ENCODE measurements at regions of chr12 and their contacts with region 1.

Region 1: DNA sequence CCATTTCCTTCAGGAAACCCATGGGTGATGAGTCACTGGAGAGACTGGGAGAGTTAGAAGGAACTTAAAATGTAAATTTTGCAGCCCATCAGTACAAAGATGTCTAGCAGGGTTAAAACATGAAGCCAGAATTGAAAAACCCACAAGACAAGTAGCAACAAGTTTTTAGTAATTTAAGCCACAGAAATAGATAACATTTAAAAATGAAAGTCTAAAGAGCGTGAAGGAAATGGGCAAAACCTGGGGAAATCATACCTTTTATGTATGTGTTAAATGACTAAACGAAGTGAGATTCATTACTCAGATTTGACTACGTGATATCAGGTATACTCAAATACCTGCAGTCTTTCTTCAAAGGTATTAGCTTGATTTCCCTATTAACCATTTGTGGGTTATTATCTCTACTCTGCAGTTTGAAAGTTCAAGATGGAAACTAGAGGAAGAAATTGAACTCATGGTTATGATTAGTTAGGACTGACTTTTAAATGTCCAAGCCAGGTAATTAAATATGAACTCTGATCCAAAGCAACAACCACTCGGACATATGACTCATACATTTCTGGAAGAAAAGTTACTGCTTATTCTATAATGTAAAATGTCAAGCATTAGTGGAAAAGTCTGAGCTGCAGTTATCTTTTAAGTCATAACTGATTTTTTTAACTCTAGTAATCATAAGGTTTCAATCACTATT is 84.1 kb downstream of the ITPR2 start:
- DNase-seq: no peak
- ATAC-seq: peak; percentile 19
- H3K4me3 Mint-ChIP-seq: peak overlapping the region; percentile 11
- H3K27ac Mint-ChIP-seq: peak overlapping the region; percentile 61
- H3K4me1 Mint-ChIP-seq: peaks cover 53% of the 10 kb centered on the region
- H3K27me3 Mint-ChIP-seq: no peaks in the 10 kb centered on the region
- CTCF ChIP-seq: no peak

Region 2: DNA sequence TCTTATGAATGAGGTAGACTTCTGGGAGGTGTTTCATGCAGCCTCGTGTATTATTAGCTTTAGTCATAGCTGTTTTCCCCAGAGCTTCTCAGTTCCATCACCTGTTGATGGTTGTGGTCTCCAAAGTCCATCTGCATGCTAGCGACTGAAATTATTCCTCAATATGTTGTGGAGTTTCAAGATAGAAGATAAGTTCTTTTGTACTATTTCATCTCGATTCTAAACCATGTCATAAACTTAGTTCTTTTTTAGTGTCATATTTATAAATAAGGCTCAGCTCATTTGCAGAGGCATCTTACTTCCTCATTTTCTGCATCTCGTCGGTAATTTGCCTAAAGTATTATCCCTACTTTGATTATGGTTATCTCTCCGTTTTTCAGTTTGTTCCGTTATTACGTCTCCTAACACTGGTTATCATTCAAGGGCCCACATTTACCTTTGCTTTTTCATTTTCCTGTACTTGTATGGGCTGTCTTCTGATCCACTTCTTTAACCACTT is 35.0 kb before region 1 on chr12:
- CTCF ChIA-PET with region 1: no interaction called
- POLR2A ChIA-PET with region 1: no interaction called
- intact Hi-C with region 1: loop called (anchors 2 kb)
- DNase-seq: no peak
- ATAC-seq: peak; percentile 64
- H3K4me3 Mint-ChIP-seq: peak overlapping the region; percentile 25
- H3K27ac Mint-ChIP-seq: peak overlapping the region; percentile 38
- H3K4me1 Mint-ChIP-seq: peaks cover 25% of the 10 kb centered on the region
- H3K27me3 Mint-ChIP-seq: no peaks in the 10 kb centered on the region
- CTCF ChIP-seq: no peak

Region 3: GRCh38 chr12:26732005-26732908 is 16.6 kb before region 1 on chr12:
- CTCF ChIA-PET with region 1: no interaction called
- POLR2A ChIA-PET with region 1: no interaction called
- intact Hi-C with region 1: loop called (anchors 1 kb)
- DNase-seq: no peak
- ATAC-seq: peak; percentile 74
- H3K4me3 Mint-ChIP-seq: peak overlapping the region; percentile 52
- H3K27ac Mint-ChIP-seq: peak overlapping the region; percentile 86
- H3K4me1 Mint-ChIP-seq: peaks cover 71% of the 10 kb centered on the region
- H3K27me3 Mint-ChIP-seq: no peaks in the 10 kb centered on the region
- CTCF ChIP-seq: no peak

Region 4: DNA sequence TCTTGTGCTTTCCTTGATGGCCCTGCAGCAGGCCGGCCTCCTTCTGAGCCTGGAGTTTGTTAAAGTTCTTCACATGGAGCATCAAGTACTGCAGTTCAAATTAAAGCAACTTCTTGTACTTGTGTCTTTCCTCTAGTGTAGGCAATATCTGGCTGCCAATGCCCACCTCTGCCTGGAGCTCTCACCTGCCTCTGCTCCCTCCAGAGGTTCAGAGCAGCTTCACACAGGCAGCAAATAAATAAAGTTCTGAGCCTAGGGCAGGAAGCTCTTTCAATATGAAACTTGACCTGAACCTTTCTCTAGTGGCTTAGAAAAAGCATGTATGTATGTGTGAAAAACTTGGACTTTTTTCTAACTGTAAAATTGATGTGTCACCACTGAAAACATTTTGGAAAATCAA is 18.2 kb after region 1 on chr12:
- CTCF ChIA-PET with region 1: no interaction called
- POLR2A ChIA-PET with region 1: interaction called, 3 read pairs
- intact Hi-C with region 1: loop called (anchors 2 kb)
- DNase-seq: no peak
- ATAC-seq: no peak
- H3K4me3 Mint-ChIP-seq: no peak overlapping the region
- H3K27ac Mint-ChIP-seq: no peak overlapping the region
- H3K4me1 Mint-ChIP-seq: peaks cover 23% of the 10 kb centered on the region
- H3K27me3 Mint-ChIP-seq: no peaks in the 10 kb centered on the region
- CTCF ChIP-seq: no peak

Region 5: DNA sequence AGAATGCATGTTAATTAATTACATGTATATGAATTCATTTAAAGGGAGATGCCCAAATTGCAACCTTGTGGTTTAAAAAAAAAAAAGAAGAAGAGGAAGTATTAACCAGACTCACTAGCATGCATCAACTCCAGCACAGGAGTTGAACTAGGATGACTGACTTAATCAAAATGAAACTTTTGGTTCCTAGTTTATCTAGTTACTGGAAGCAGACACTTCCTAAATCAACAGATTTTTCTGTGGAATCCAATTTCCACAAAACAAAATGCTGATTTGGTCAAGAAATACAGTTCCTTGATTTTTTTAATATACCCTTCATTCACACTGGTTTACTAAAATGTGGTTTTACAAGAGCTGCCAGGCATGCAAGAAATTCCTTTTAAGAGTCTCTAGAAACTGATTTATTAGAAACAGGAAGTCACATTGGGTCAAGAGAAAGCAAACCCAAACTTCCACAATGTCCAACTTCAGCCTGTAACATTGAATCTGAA is 42.5 kb after region 1 on chr12:
- CTCF ChIA-PET with region 1: no interaction called
- POLR2A ChIA-PET with region 1: no interaction called
- intact Hi-C with region 1: loop called (anchors 1 kb)
- DNase-seq: no peak
- ATAC-seq: peak; percentile 75
- H3K4me3 Mint-ChIP-seq: no peak overlapping the region
- H3K27ac Mint-ChIP-seq: peak overlapping the region; percentile 46
- H3K4me1 Mint-ChIP-seq: peaks cover 26% of the 10 kb centered on the region
- H3K27me3 Mint-ChIP-seq: no peaks in the 10 kb centered on the region
- CTCF ChIP-seq: no peak

Region 6: GRCh38 chr12:27260746-27261145 is 511.9 kb after region 1 on chr12:
- CTCF ChIA-PET with region 1: no interaction called
- POLR2A ChIA-PET with region 1: no interaction called
- intact Hi-C with region 1: no loop called
- DNase-seq: no peak
- ATAC-seq: no peak
- H3K4me3 Mint-ChIP-seq: no peak overlapping the region
- H3K27ac Mint-ChIP-seq: no peak overlapping the region
- H3K4me1 Mint-ChIP-seq: peaks cover 7% of the 10 kb centered on the region
- H3K27me3 Mint-ChIP-seq: no peaks in the 10 kb centered on the region
- CTCF ChIP-seq: no peak